GM12878 (cell line): ENCODE measurements at regions of chr1 and their contacts with region 1.

Region 1: GRCh38 chr1:234933475-234933874 is 195.2 kb downstream of the TOMM20 start:
- DNase-seq: peak; percentile 85
- ATAC-seq: peak; percentile 95
- H3K4me3 ChIP-seq: peak overlapping the region; percentile 44; the same call in 1 of the 2 replicates
- H3K27ac ChIP-seq: peak overlapping the region; percentile 95
- H3K4me1 ChIP-seq: peaks cover 41% of the 10 kb centered on the region
- H3K27me3 ChIP-seq: no peaks in the 10 kb centered on the region
- CTCF ChIP-seq: no peak
- EP300 ChIP-seq: peak; percentile 75 to 81
- POLR2A ChIP-seq: peak; percentile 55; the same call in 1 of the 2 replicates
- RAD21 ChIP-seq: no peak

Region 2: DNA sequence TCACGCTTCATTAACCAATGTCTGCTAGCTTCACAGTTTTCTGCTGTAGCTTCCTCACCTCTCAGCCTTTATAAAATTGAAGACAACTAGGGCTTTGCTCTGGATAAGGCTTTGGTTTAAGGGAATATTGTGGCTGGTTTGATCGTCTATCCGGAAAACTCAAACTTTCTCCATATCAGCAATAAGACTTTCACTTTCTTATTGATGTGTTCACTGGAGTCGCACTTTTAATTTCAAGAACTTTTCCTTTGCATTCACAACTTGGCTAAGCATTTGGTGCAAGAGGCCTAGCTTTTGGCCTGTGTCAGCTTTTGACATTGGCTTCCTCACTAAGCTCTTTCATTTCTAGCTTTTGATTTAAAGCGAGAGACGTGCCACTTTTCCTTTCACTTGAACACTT is 547.4 kb before region 1 on chr1:
- CTCF ChIA-PET with region 1: no interaction called
- POLR2A ChIA-PET with region 1: no interaction called
- RAD21 ChIA-PET with region 1: no interaction called
- SMC1A ChIA-PET with region 1: no interaction called
- in situ Hi-C with region 1: no loop called
- intact Hi-C with region 1: no loop called
- DNase-seq: no peak
- ATAC-seq: no peak; the same call in none of the 3 replicates
- H3K4me3 ChIP-seq: peak overlapping the region; percentile 20; the same call in 1 of the 2 replicates
- H3K27ac ChIP-seq: peak overlapping the region; percentile 21
- H3K4me1 ChIP-seq: no peaks in the 10 kb centered on the region
- H3K27me3 ChIP-seq: no peaks in the 10 kb centered on the region
- CTCF ChIP-seq: no peak
- EP300 ChIP-seq: no peak
- POLR2A ChIP-seq: no peak
- RAD21 ChIP-seq: no peak

Region 3: GRCh38 chr1:234871710-234872271 is 61.7 kb before region 1 on chr1:
- CTCF ChIA-PET with region 1: no interaction called
- POLR2A ChIA-PET with region 1: no interaction called
- RAD21 ChIA-PET with region 1: no interaction called
- SMC1A ChIA-PET with region 1: no interaction called
- in situ Hi-C with region 1: no loop called
- intact Hi-C with region 1: no loop called
- DNase-seq: no peak
- ATAC-seq: no peak
- H3K4me3 ChIP-seq: no peak overlapping the region
- H3K27ac ChIP-seq: no peak overlapping the region
- H3K4me1 ChIP-seq: peaks cover 8% of the 10 kb centered on the region
- H3K27me3 ChIP-seq: no peaks in the 10 kb centered on the region
- CTCF ChIP-seq: no peak
- EP300 ChIP-seq: no peak
- POLR2A ChIP-seq: no peak
- RAD21 ChIP-seq: no peak

Region 4: GRCh38 chr1:234899041-234899729 is 34.3 kb before region 1 on chr1:
- CTCF ChIA-PET with region 1: no interaction called
- POLR2A ChIA-PET with region 1: no interaction called
- RAD21 ChIA-PET with region 1: no interaction called
- SMC1A ChIA-PET with region 1: no interaction called
- in situ Hi-C with region 1: no loop called
- intact Hi-C with region 1: no loop called
- DNase-seq: no peak
- ATAC-seq: peak; percentile 38
- H3K4me3 ChIP-seq: no peak overlapping the region
- H3K27ac ChIP-seq: no peak overlapping the region
- H3K4me1 ChIP-seq: peaks cover 6% of the 10 kb centered on the region
- H3K27me3 ChIP-seq: no peaks in the 10 kb centered on the region
- CTCF ChIP-seq: no peak
- EP300 ChIP-seq: no peak
- POLR2A ChIP-seq: no peak
- RAD21 ChIP-seq: no peak

Region 5: GRCh38 chr1:234944439-234945344 is 11.2 kb after region 1 on chr1:
- CTCF ChIA-PET with region 1: interaction called, 3 read pairs
- POLR2A ChIA-PET with region 1: interaction called, 7 read pairs
- RAD21 ChIA-PET with region 1: interaction called, 4 read pairs
- SMC1A ChIA-PET with region 1: interaction called, 13 read pairs
- in situ Hi-C with region 1: no loop called
- intact Hi-C with region 1: no loop called
- DNase-seq: no peak
- ATAC-seq: peak; percentile 75
- H3K4me3 ChIP-seq: no peak overlapping the region
- H3K27ac ChIP-seq: peak overlapping the region; percentile 69
- H3K4me1 ChIP-seq: peaks cover 16% of the 10 kb centered on the region; the same call in 1 of the 2 replicates
- H3K27me3 ChIP-seq: no peaks in the 10 kb centered on the region
- CTCF ChIP-seq: no peak
- EP300 ChIP-seq: no peak; a peak in 1 of 4 replicates
- POLR2A ChIP-seq: no peak
- RAD21 ChIP-seq: no peak